Left lung (tissue), 14 donors: ENCODE measurements at regions of chr10 and their contacts with region 1.

Region 1: DNA sequence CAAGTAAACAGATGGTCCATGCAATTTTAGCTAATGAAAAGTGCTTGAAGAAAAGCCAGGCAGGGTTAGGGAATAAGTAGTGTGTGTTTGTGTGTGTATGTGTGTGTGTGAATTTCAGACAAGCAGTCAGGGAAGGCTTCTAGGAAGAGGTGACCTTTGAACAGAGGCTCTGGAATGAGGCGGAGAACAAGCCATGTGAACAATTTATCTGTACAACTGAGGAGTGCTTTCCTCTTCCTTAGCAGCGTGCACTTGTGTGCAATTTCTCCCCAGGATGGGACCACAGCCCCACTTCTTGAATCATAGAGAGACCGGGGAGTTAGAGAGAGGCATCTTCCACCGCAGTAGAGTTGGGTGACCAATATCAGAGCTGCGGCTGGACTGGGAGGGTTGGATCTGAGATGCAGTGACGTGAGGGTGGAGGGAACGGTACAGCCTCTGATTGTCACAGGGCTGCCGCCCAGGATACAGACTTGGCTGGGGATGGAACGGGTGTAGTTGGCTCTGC is 69.2 kb upstream of the FAM171A1 start:
- DNase-seq: no peak
- ATAC-seq: no peak
- H3K4me3 ChIP-seq: no peak overlapping the region
- H3K27ac ChIP-seq: no peak overlapping the region
- H3K4me1 ChIP-seq: peaks cover 0 to 4% of the 10 kb centered on the region in 2 donors
- H3K27me3 ChIP-seq: peaks cover 0 to 21% of the 10 kb centered on the region in 2 donors
- CTCF ChIP-seq: no peak

Region 2: GRCh38 chr10:15046626-15047025 is 393.6 kb before region 1 on chr10:
- intact Hi-C with region 1: no loop called
- DNase-seq: no peak
- ATAC-seq: peak; percentile 26
- H3K4me3 ChIP-seq: no peak overlapping the region
- H3K27ac ChIP-seq: no peak overlapping the region
- H3K4me1 ChIP-seq: peaks cover 0 to 7% of the 10 kb centered on the region in 2 donors
- H3K27me3 ChIP-seq: no peaks in the 10 kb centered on the region
- CTCF ChIP-seq: no peak

Region 3: DNA sequence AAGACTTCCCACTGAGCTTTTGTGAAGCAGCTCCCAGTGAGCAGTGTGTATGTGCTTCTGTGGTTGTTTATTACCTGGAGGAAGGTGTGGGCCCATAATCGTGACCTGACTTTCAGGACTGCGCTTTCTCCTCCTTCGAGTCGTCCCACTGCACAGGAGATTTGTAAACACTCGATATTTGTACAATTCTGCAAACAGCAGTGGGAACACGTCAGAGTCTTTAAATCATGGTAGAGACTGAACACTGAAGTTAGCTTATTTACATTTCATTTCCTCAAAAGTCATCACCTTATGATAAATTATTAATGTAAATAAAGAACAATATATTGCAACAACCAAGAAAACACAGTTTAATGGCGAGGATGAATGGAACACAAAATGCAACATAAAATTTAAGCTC is 108.1 kb after region 1 on chr10:
- intact Hi-C with region 1: no loop called
- DNase-seq: no peak
- ATAC-seq: no peak
- H3K4me3 ChIP-seq: no peak overlapping the region
- H3K27ac ChIP-seq: no peak overlapping the region
- H3K4me1 ChIP-seq: no peaks in the 10 kb centered on the region
- H3K27me3 ChIP-seq: no peaks in the 10 kb centered on the region
- CTCF ChIP-seq: no peak

Region 4: DNA sequence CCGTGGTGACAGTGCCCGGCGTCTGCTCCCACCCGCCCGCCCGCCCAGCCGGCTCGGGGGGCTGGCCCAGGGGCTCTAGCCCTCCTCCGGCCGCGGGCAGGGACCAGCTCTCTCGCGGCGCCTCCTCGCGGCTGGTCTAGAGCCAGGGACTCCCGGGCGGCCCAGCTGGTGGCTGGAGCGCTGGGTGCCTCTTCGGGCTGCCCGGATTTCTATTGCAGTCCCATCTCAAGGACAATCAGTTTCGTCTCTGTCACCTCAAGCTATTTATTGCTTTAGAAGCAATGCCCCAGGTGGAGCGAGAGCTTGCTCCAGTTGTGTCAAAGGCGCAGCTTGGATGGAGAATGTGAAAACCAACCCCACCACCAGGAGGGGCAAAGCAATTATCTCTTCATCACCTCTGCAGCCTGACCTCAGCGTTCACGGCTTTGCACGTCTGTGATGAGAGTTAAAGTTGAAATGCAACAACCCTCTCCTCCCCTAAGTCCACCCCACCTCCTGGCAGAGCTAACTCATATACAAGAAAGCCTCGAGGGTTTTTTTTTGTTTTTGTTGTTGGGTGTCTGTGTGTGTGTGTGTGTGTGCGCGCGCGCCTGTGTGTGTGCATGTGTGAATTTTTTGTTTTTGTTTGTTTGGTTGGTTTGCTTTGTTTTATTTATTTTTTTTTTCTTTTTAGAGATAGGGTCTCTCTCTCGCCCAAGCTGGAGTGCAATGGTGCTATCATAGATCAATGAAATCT is 279.8 kb after region 1 on chr10 and contains the start of gene ITGA8:
- intact Hi-C with region 1: loop called in 1 of 2 experiments (anchors 5 kb)
- DNase-seq: peak in 3 of 4 donors; percentile 72 to 86 (median 79)
- ATAC-seq: peak; percentile 78
- H3K4me3 ChIP-seq: peak within 1 kb of the TSS; percentile 39 to 42
- H3K27ac ChIP-seq: peak within 1 kb of the TSS; percentile 63 to 72
- H3K4me1 ChIP-seq: peaks cover 0 to 4% of the 10 kb centered on the region in 2 donors
- H3K27me3 ChIP-seq: peaks cover 16 to 57% of the 10 kb centered on the region in 2 donors
- CTCF ChIP-seq: peak; percentile 22 to 25
- polyA plus RNA-seq, gene ITGA8: 55.6 to 83.3 (median 72.1) TPM